Colonic mucosa (tissue), 4 donors: ENCODE measurements at regions of chr17 and their contacts with region 1.

Region 1: GRCh38 chr17:28916302-28916934 is 13.5 kb upstream of the DHRS13 start:
- DNase-seq: peak; percentile 54
- H3K4me3 ChIP-seq: no peak overlapping the region
- H3K27ac ChIP-seq: no peak overlapping the region
- H3K4me1 ChIP-seq: peaks cover 5% of the 10 kb centered on the region
- H3K27me3 ChIP-seq: no peaks in the 10 kb centered on the region
- CTCF ChIP-seq: peak; percentile 55

Region 2: GRCh38 chr17:28552246-28552999 is 364.0 kb before region 1 on chr17 and contains the start of gene UNC119:
- intact Hi-C with region 1: no loop called
- DNase-seq: peak; percentile 84
- H3K4me3 ChIP-seq: peak within 1 kb of the TSS; percentile 96
- H3K27ac ChIP-seq: peak within 1 kb of the TSS; percentile 67
- H3K4me1 ChIP-seq: no peaks in the 10 kb centered on the region
- H3K27me3 ChIP-seq: no peaks in the 10 kb centered on the region
- CTCF ChIP-seq: no peak
- total RNA-seq, gene UNC119: 31.4 to 39.8 TPM

Region 3: DNA sequence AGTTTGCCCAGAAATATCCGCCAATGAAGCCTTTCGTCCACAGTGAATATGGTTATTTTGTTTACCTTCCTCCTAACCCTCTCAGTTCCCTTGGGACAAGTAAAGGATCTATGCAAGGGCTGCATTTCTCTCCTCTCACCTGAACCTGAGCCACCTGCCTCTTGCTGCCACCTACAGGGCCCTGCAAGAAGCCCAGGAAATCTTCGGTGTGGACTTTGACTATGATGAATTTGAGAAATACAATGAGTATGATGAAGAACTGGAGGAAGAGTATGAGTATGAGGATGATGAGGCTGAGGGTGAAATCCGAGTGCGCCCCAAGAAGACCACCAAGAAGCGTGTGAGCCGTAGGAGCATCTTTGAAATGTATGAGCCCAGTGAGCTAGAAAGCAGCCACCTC is 240.4 kb before region 1 on chr17:
- intact Hi-C with region 1: no loop called
- DNase-seq: no peak
- H3K4me3 ChIP-seq: no peak overlapping the region
- H3K27ac ChIP-seq: no peak overlapping the region
- H3K4me1 ChIP-seq: no peaks in the 10 kb centered on the region
- H3K27me3 ChIP-seq: no peaks in the 10 kb centered on the region
- CTCF ChIP-seq: peak; percentile 32

Region 4: GRCh38 chr17:28765038-28765437 is 151.4 kb before region 1 on chr17:
- intact Hi-C with region 1: loop called (anchors 5 kb)
- DNase-seq: no peak
- H3K4me3 ChIP-seq: no peak overlapping the region
- H3K27ac ChIP-seq: no peak overlapping the region
- H3K4me1 ChIP-seq: no peaks in the 10 kb centered on the region
- H3K27me3 ChIP-seq: no peaks in the 10 kb centered on the region
- CTCF ChIP-seq: no peak

Region 5: DNA sequence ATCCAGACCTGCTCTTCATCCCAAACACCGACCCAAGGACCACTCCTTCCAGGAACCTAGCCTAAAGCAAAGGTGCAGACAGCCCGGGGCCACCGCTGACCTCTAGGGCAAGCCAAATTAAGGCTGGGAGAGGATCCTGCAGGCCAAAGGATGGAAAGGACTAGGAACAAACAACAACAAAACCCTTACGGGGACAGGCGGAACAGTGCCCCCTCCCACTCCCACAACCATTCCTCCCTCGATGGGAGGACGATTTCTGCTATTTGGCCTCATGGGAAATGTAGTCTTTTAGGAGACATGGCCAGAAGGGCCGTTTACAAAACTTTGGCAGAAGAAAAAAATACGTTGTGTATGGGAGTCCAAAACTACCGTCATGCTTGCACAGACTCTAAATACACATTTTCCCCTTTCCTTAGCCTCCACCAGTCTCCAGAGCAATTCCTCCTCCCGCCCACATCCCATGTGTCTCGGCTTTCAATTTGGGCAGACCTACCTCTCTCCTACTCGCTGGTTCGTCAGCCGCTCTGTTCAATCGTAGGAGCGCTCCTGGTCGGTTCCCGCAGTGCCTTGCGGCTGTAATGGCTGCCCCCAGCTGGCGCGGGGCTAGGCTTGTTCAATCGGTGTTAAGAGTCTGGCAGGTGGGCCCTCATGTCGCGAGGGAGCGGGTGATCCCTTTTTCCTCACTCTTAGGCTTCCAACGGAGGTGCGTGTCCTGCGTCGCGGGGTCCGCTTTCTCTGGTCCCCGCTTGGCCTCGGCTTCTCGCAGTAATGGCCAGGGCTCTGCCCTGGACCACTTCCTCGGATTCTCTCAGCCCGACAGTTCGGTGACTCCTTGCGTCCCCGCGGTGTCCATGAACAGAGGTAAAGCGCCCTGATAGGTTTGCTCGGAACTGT is 61.7 kb before region 1 on chr17 and contains the start of gene ERAL1:
- intact Hi-C with region 1: loop called (anchors 10 kb)
- DNase-seq: peak; percentile 90
- H3K4me3 ChIP-seq: peak within 1 kb of the TSS; percentile 71
- H3K27ac ChIP-seq: peak within 1 kb of the TSS; percentile 34
- H3K4me1 ChIP-seq: peaks cover 5% of the 10 kb centered on the region
- H3K27me3 ChIP-seq: no peaks in the 10 kb centered on the region
- CTCF ChIP-seq: no peak
- total RNA-seq, gene ERAL1: 34.7 to 72.0 TPM